Thyroid gland (tissue), 4 donors: ENCODE measurements at regions of chr1 and their contacts with region 1.

Region 1: DNA sequence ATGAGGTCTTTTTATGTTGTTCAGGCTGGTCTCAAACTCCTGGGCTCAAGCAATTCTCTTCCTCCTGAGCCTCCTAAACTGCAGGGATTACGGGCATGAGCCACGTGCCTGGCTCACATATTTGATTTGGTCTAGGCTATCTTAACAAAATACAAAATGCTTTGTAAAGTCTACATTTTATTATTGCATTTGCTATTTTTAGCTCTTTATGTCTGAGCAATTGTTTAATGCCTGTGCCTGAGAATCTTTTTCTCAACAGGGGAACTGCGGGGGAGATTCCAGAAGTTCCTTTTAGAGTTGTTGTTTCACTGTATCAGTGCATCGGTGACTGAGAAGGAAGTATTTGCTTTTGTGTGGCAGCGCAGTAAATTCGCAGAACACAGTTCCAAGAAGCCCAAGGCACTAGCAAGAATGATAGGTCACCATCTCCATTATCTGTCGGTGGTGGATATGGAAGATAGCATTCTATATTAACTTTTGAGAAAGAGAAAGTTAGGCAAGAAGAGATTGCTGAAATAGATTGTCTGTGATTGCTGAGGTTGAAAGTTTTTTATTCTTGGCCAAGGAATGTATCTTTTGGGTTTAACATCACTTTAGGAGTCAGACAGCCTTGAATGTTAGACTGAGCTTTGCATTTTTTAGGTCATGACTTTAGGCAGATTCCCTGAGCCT is 167.3 kb downstream of the PDE4B start:
- DNase-seq: no peak
- H3K4me3 ChIP-seq: no peak overlapping the region
- H3K27ac ChIP-seq: no peak overlapping the region
- H3K4me1 ChIP-seq: no peaks in the 10 kb centered on the region
- H3K27me3 ChIP-seq: no peaks in the 10 kb centered on the region
- CTCF ChIP-seq: no peak
- POLR2A ChIP-seq: no peak

Region 2: GRCh38 chr1:66242646-66243547 is 282.9 kb after region 1 on chr1:
- intact Hi-C with region 1: loop called (anchors 2 kb)
- DNase-seq: peak; percentile 85 to 88
- H3K4me3 ChIP-seq: no peak overlapping the region
- H3K27ac ChIP-seq: no peak overlapping the region
- H3K4me1 ChIP-seq: no peaks in the 10 kb centered on the region
- H3K27me3 ChIP-seq: no peaks in the 10 kb centered on the region
- CTCF ChIP-seq: peak; percentile 93 to 99 (median 99)
- POLR2A ChIP-seq: no peak

Region 3: GRCh38 chr1:66446261-66447001 is 486.4 kb after region 1 on chr1:
- intact Hi-C with region 1: loop called (anchors 5 kb)
- DNase-seq: peak in 1 of 2 donors; percentile 8
- H3K4me3 ChIP-seq: no peak overlapping the region
- H3K27ac ChIP-seq: peak overlapping the region in 2 of 3 donors; percentile 34 to 48
- H3K4me1 ChIP-seq: peaks cover 16 to 23% of the 10 kb centered on the region in 2 donors
- H3K27me3 ChIP-seq: no peaks in the 10 kb centered on the region
- CTCF ChIP-seq: peak; percentile 70 to 98 (median 84)
- POLR2A ChIP-seq: no peak